ENCODE measurements at regions of chr1 and their contacts with region 1.

Region 1: GRCh38 chr1:109620841-109621286 is 1.2 kb downstream of the AMPD2 start:
- DNase-seq: peak; percentile 98
- H3K4me3 Mint-ChIP-seq: peak overlapping the region; percentile 98
- H3K27ac Mint-ChIP-seq: peak overlapping the region; percentile 96
- H3K4me1 Mint-ChIP-seq: peaks cover 58% of the 10 kb centered on the region
- H3K27me3 Mint-ChIP-seq: no peaks in the 10 kb centered on the region

Region 2: DNA sequence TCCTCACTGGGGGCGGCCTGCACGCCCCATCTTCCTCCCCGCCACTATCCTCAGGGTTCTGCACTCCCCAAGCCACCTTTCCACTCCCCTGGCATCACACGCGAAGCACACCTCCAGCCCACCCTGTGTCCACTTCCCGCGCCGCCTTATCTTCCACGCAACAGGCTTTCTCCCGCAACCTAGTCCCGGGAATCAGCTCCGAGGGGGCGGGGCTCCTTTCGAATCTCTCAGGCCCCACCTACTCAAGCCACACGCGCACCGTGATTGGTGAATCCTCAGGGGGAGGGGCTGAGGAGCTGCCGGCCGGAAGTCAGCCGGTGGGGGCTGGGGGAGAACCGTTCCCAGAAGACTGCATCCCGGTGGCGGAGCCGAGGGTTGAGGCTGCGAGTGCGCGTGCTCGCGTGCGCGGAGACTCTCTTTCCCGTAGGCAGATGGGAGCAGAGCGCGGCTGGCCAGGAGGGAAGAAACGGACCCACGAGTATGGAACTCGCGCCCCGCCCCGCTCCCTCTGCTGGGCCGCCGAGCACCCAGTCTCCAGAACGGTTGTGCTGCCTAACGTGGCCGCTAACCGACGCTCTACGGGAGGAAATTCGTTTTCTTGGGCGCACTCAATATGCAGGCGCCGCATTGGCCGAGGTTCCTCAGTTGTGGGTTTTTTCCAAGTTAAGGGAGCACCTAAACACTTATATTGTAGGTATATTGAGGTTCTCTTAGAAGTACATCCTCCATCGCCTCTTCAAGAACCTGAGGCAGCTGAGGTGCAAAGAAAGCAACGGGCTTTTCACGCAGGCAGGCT is 337.7 kb before region 1 on chr1 and contains the start of gene PSRC1:
- CTCF ChIA-PET with region 1: no interaction called
- POLR2A ChIA-PET with region 1: no interaction called
- intact Hi-C with region 1: loop called (anchors 5 kb)
- DNase-seq: peak; percentile 94
- H3K4me3 Mint-ChIP-seq: peak within 1 kb of the TSS; percentile 95
- H3K27ac Mint-ChIP-seq: peak within 1 kb of the TSS; percentile 89
- H3K4me1 Mint-ChIP-seq: peaks cover 12% of the 10 kb centered on the region
- H3K27me3 Mint-ChIP-seq: no peaks in the 10 kb centered on the region
- total RNA-seq, gene PSRC1: 14.9 to 16.3 TPM

Region 3: DNA sequence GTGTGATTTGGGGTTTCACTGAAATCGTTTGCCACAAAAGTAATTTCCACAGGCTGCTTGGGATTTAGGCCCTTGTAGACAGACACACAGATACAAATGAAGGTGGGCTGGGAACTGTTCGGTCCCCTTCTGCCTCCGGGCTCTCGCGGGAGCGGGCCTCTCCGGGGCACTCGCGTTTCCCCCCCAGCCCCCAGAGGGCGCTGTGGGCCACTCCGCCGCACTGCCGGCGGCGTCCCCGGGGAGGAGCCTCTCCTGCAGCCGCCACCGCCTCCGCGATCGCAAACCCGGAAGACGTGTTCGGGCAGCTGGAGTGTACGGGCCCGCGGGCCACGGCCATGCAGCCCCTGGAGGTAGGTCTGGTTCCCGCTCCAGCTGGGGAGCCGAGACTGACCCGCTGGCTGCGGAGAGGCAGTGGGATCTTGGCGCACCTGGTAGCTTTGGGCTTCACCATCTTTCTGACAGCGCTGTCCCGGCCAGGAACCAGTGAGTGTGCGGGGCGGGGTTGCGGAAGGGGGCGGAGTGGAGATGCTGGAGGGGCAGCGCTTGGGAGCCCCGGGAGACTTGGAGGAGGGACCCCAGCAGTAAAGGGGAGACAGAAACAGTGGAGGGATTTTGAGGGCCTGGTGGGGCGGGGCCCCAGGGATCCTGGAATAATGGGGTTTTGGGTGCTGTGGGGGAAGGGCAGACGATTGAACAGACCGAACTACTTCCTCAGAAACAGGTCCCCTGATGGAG is 126.9 kb before region 1 on chr1 and contains the start of gene CYB561D1:
- CTCF ChIA-PET with region 1: interaction called, 4 read pairs
- POLR2A ChIA-PET with region 1: no interaction called
- intact Hi-C with region 1: loop called (anchors 5 kb)
- DNase-seq: peak; percentile 93
- H3K4me3 Mint-ChIP-seq: peak within 1 kb of the TSS; percentile 89
- H3K27ac Mint-ChIP-seq: peak within 1 kb of the TSS; percentile 78
- H3K4me1 Mint-ChIP-seq: peaks cover 44% of the 10 kb centered on the region
- H3K27me3 Mint-ChIP-seq: no peaks in the 10 kb centered on the region
- total RNA-seq, gene CYB561D1: 6.6 to 8.7 TPM

Region 4: DNA sequence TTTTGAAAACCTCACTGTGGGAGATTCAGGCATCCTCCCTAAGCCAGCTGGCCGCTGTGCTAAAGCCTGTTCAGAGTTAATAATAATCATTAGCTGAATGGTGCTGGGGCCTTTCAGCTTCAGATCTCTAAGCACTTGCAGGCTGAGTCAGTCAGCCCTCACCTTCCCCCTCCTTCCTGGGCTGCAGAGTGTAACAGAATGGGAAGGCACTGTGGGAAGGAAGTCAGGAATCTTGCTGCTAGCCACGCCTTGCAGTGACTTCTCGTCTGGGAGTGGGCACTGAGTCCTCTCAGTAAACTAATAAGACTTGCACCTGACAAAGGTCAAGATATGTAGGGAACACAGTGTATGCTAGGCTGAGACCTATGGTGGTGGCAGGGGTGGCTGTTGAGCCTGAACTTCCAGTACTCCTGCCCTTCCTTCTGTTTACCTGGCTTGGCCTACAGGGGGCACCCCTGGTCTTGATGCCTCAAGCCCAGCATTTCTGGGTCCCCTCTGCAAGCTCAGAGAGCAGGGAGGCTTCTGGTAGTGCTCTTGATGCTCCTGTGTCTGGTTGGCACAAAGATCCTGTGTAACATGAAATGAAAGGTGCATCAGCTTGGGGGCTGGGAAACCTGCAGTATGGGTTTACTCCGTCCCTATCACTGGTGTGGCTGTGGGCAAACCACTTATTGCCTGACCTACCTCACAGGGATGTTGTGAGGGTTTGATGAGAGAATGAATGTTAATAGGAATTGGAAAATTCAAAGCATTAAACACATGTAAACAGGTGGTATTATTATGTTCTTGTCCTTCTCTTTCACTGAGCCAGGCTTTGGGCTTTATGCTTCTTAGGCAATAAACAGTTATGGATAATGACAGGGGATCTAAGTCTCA is 121.0 kb before region 1 on chr1:
- CTCF ChIA-PET with region 1: no interaction called
- POLR2A ChIA-PET with region 1: no interaction called
- intact Hi-C with region 1: loop called (anchors 5 kb)
- DNase-seq: peak; percentile 70
- H3K4me3 Mint-ChIP-seq: no peak overlapping the region
- H3K27ac Mint-ChIP-seq: peak overlapping the region; percentile 38
- H3K4me1 Mint-ChIP-seq: peaks cover 88% of the 10 kb centered on the region
- H3K27me3 Mint-ChIP-seq: no peaks in the 10 kb centered on the region

Region 5: GRCh38 chr1:109548321-109549267 is 72.3 kb before region 1 on chr1 and contains the start of gene GNAI3:
- CTCF ChIA-PET with region 1: interaction called, 34 read pairs
- POLR2A ChIA-PET with region 1: interaction called, 35 read pairs
- intact Hi-C with region 1: loop called (anchors 1 kb)
- DNase-seq: peak; percentile 98
- H3K4me3 Mint-ChIP-seq: peak within 1 kb of the TSS; percentile 86
- H3K27ac Mint-ChIP-seq: peak within 1 kb of the TSS; percentile 94
- H3K4me1 Mint-ChIP-seq: peaks cover 41% of the 10 kb centered on the region
- H3K27me3 Mint-ChIP-seq: no peaks in the 10 kb centered on the region
- total RNA-seq, gene GNAI3: 9.2 to 9.9 TPM

Region 6: GRCh38 chr1:109598655-109599054 is 22.2 kb before region 1 on chr1:
- CTCF ChIA-PET with region 1: no interaction called
- POLR2A ChIA-PET with region 1: no interaction called
- intact Hi-C with region 1: loop called (anchors 2 kb)
- DNase-seq: no peak
- H3K4me3 Mint-ChIP-seq: no peak overlapping the region
- H3K27ac Mint-ChIP-seq: no peak overlapping the region
- H3K4me1 Mint-ChIP-seq: peaks cover 22% of the 10 kb centered on the region
- H3K27me3 Mint-ChIP-seq: no peaks in the 10 kb centered on the region

Region 7: GRCh38 chr1:109636201-109636952 is 15.5 kb after region 1 on chr1:
- CTCF ChIA-PET with region 1: interaction called, 29 read pairs
- POLR2A ChIA-PET with region 1: no interaction called
- intact Hi-C with region 1: loop called (anchors 1 kb)
- DNase-seq: no peak
- H3K4me3 Mint-ChIP-seq: no peak overlapping the region
- H3K27ac Mint-ChIP-seq: no peak overlapping the region
- H3K4me1 Mint-ChIP-seq: peaks cover 18% of the 10 kb centered on the region
- H3K27me3 Mint-ChIP-seq: no peaks in the 10 kb centered on the region

Measured in activated CD4-positive, alpha-beta memory T cell treated with anti-CD3 and anti-CD28 coated beads for 36 hours (primary cell).